Common myeloid progenitor, CD34-positive (primary cell): ENCODE measurements at regions of chr1 and their contacts with region 1.

Region 1: DNA sequence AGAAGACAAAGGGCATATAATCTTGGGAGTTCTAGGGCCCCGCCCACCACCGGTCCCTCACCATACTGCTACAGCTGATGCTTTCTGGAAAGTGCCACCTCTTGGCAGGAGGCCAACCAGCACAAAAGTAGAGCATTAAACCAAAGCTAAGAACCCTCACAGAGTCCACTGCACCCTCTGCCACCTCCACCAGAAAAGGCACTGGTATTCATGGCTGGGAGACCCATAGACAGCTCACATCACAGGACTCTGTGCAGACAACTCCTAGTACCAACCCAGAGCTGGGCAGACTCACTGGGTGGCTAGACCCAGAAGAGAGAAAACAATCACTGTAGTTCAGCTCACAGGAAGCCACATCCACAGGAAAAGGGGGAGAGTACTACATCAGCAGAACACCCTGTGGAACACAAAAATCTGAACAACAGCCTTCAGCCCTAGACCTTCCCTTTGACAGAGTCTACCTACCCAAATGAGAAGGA is 10.8 kb downstream of the THEM4 start:
- DNase-seq: peak; percentile 20 to 52 (median 33)
- H3K4me3 ChIP-seq: peak overlapping the region in 4 of 7 experiments; percentile 25 to 60 (median 40)
- H3K27ac ChIP-seq: no peak overlapping the region
- H3K4me1 ChIP-seq: peaks cover 0 to 22% (median 12%) of the 10 kb centered on the region in 4 experiments
- H3K27me3 ChIP-seq: no peaks in the 10 kb centered on the region

Region 2: GRCh38 chr1:151815716-151816327 is 82.7 kb before region 1 on chr1:
- CTCF ChIA-PET with region 1: no interaction called
- POLR2A ChIA-PET with region 1: no interaction called
- DNase-seq: peak in 2 of 3 donors; percentile 56 to 61
- H3K4me3 ChIP-seq: peak overlapping the region in 1 of 7 experiments; percentile 31
- H3K27ac ChIP-seq: no peak overlapping the region
- H3K4me1 ChIP-seq: peaks cover 7 to 43% (median 41%) of the 10 kb centered on the region in 4 experiments
- H3K27me3 ChIP-seq: no peaks in the 10 kb centered on the region

Region 3: DNA sequence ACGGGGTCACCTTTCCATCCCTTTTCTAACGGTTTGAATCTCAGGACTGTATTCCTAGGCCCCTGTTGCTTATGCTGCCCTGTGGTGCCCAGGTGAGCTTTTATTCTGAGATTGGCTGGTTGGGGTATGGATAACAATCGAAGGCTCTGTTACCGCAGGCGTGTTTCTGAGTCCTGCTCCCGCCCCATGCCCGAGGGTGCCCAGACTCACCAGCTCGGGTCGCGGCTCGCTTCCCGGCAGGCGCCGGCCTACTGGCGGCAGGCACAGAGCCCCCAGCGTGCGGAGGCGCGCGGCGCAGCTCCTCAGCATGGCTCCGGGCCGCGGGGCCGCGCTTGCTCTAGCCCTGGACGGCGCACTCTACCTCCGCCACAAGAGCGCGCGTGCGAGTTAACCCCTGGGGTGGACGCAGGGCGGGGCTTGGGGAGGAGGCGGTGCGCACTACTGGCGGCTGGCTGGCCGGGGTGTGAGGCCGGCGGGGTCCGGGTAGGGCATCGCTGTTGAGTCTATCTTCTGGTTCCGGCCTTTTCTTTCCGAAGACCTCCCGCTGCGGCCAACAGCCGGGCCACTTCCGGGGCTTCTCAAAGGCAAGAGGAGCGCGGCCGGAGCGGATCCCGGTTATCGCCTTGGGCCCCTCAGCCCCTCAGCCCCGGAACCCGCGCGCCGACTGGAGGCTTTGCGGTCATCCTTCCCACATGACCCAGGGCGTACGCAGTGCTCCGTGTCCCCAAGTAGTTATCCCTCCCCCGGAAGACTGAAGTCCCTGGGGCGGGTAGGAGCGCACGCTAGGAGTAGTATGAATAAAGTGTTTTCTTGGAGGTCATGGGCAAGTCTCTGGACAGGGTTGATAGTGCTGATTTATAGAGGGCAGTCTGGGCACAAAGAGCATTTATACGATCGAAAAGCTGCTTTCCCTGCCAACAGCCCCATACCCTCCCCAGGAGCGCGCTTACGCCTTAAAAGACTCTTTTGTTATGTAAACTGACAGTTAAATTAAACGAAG is 10.9 kb after region 1 on chr1 and contains the start of gene THEM4:
- CTCF ChIA-PET with region 1: interaction called, 18 read pairs
- POLR2A ChIA-PET with region 1: no interaction called
- DNase-seq: peak; percentile 95 to 97 (median 96)
- H3K4me3 ChIP-seq: peak within 1 kb of the TSS; percentile 50 to 89 (median 77)
- H3K27ac ChIP-seq: peak within 1 kb of the TSS; percentile 77 to 86
- H3K4me1 ChIP-seq: peaks cover 0 to 30% (median 24%) of the 10 kb centered on the region in 4 experiments
- H3K27me3 ChIP-seq: no peaks in the 10 kb centered on the region